Caco-2 (cell line): ENCODE measurements at regions of chr20 and their contacts with region 1.

Region 1: DNA sequence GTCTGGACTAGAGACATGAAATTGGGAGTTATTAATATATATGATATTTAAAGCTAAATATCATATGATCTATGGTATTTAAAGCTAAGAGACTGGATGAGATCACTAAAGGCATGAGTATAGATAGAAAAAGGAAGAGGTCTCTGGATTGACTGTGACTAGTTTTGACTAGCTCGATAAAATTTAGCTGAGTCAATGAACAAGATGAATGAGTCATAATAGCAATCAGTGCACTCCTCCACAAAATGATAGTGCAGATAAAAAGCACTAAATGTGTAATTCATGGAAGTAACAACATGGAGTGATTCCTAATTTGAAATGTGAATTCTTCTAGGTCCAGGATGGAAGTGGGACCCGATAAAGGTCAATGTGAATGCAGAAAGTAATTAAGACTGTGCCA is 127.4 kb downstream of the PFDN4 start:
- DNase-seq: no peak
- H3K4me3 ChIP-seq: no peak overlapping the region
- H3K4me3 Mint-ChIP-seq: no peak overlapping the region
- H3K27ac Mint-ChIP-seq: no peak overlapping the region
- H3K4me1 ChIP-seq: no peaks in the 10 kb centered on the region
- H3K4me1 Mint-ChIP-seq: no peaks in the 10 kb centered on the region
- H3K27me3 ChIP-seq: no peaks in the 10 kb centered on the region
- H3K27me3 Mint-ChIP-seq: peaks cover 3% of the 10 kb centered on the region
- CTCF ChIP-seq: no peak

Region 2: DNA sequence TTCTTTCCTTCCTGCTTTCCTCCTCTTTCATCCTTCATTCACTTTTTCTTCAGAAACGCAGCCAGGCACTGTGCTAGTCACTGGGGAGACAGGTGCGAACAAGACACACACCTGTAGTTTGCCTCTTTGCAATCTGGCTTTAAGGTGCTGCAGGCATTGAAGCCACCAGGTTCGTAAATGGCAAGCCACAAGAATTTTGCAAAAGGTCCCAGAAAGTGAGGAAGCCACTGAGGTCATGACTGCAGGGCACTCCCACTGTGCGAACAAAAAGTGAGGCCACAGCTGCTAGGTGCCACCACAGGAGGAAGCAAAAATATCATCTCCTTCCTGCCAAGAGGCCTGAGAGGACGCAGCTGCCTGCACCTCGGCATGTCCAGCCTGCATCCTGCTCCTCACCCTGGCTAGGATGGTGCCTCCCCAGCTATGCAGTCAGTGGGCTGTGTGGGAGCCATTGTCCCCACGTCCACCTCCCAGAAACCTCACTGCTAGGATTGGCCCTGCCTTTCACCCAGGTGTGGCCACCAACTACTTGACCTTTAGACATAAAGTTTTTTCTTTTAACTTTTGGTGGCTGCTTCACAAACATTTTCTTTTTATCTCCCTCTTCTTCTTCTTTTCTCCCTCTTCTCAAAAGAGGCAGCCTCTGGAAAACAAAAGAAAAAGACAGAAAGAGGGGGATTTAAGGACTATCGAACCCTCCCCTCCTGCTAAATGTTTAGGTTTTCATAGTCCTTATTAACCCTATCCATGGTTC is 495.7 kb before region 1 on chr20:
- CTCF ChIA-PET with region 1: no interaction called
- POLR2A ChIA-PET with region 1: no interaction called
- intact Hi-C with region 1: no loop called
- DNase-seq: peak; percentile 36 to 62
- H3K4me3 ChIP-seq: no peak overlapping the region
- H3K4me3 Mint-ChIP-seq: no peak overlapping the region
- H3K27ac Mint-ChIP-seq: peak overlapping the region; percentile 52
- H3K4me1 ChIP-seq: peaks cover 34% of the 10 kb centered on the region
- H3K4me1 Mint-ChIP-seq: peaks cover 23% of the 10 kb centered on the region
- H3K27me3 ChIP-seq: no peaks in the 10 kb centered on the region
- H3K27me3 Mint-ChIP-seq: no peaks in the 10 kb centered on the region
- CTCF ChIP-seq: no peak

Region 3: GRCh38 chr20:54355641-54356280 is 20.5 kb after region 1 on chr20:
- CTCF ChIA-PET with region 1: no interaction called
- POLR2A ChIA-PET with region 1: no interaction called
- intact Hi-C with region 1: no loop called
- DNase-seq: no peak
- H3K4me3 ChIP-seq: no peak overlapping the region
- H3K4me3 Mint-ChIP-seq: no peak overlapping the region
- H3K27ac Mint-ChIP-seq: no peak overlapping the region
- H3K4me1 ChIP-seq: no peaks in the 10 kb centered on the region
- H3K4me1 Mint-ChIP-seq: no peaks in the 10 kb centered on the region
- H3K27me3 ChIP-seq: no peaks in the 10 kb centered on the region; the same call in 1 of the 2 replicates
- H3K27me3 Mint-ChIP-seq: peaks cover 10% of the 10 kb centered on the region
- CTCF ChIP-seq: no peak

Region 4: GRCh38 chr20:54634835-54635234 is 299.5 kb after region 1 on chr20:
- CTCF ChIA-PET with region 1: no interaction called
- POLR2A ChIA-PET with region 1: interaction called, 16 read pairs
- intact Hi-C with region 1: no loop called
- DNase-seq: no peak
- H3K4me3 ChIP-seq: no peak overlapping the region
- H3K4me3 Mint-ChIP-seq: no peak overlapping the region
- H3K27ac Mint-ChIP-seq: no peak overlapping the region
- H3K4me1 ChIP-seq: no peaks in the 10 kb centered on the region
- H3K4me1 Mint-ChIP-seq: no peaks in the 10 kb centered on the region
- H3K27me3 ChIP-seq: no peaks in the 10 kb centered on the region; the same call in 1 of the 2 replicates
- H3K27me3 Mint-ChIP-seq: peaks cover 13% of the 10 kb centered on the region
- CTCF ChIP-seq: no peak